ENCODE measurements at regions of chr6 and their contacts with region 1.

Region 1: DNA sequence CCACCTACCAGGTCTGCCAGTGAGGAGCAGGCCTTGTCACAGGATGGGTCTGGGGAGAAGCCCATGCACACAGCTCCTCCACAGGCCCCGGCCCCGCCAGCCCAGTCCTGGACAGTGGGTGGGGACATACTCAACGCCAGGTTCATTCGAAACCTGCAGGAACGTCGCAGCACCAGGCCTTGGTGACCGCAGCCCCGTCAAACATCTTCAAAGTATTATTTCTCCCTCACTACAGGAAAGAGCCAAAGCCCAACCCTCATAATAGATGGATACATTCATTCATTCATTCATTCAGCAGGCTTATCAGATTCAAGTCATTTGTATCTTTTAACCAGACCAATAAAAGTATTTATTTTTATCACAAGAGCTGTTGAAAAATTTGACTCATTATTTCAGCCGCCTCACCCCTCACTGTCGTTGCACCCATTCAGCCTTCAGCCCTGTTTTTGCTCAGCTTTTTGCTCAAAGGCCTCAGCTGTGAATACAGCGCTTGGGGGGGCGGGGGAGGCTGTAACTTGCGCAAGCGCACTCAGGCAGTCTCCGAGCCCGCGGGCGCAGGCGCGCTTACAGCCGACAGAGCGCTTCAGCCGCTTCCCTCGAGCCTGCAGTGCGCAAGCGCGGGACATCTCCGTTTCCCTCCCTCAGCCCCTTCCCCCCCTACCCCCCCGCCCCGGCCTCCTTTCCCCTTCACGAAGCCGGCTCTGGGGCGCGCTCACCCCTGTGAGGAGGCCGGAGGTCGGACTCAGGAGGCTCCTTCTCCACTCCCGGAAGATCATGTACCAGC is at the start of gene C6orf136:
- DNase-seq: peak; percentile 97
- H3K4me3 Mint-ChIP-seq: peak within 1 kb of the TSS; percentile 91
- H3K27ac Mint-ChIP-seq: peak within 1 kb of the TSS; percentile 94
- H3K4me1 Mint-ChIP-seq: peaks cover 28% of the 10 kb centered on the region
- H3K27me3 Mint-ChIP-seq: no peaks in the 10 kb centered on the region
- total RNA-seq, gene C6orf136: 28.9 and 39.4 TPM in 2 replicates

Region 2: GRCh38 chr6:30571075-30571768 is 75.4 kb before region 1 on chr6 and contains the start of gene ABCF1:
- intact Hi-C with region 1: loop called (anchors 2 kb)
- DNase-seq: peak; percentile 100
- H3K4me3 Mint-ChIP-seq: peak within 1 kb of the TSS; percentile 92
- H3K27ac Mint-ChIP-seq: peak within 1 kb of the TSS; percentile 99
- H3K4me1 Mint-ChIP-seq: peaks cover 59% of the 10 kb centered on the region
- H3K27me3 Mint-ChIP-seq: no peaks in the 10 kb centered on the region
- total RNA-seq, gene ABCF1: 123 and 125 TPM in 2 replicates

Region 3: DNA sequence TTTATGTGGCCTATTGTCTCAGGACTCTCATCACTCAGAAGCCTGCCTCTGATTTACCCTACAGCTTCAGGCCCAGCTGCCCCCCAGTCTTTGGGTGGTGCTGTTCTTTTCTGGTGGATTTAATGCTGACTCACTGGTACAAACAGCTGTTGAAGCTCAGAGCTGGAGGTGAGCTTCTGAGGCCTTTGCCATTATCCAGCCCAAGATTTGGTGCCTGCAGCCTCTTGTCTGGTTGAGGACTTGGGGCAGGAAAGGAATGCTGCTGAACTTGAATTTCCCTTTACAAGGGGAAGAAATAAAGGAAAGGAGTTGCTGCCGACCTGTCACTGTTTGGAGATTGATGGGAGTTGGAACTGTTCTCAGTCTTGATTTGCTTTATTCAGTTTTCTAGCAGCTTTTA is 55.7 kb before region 1 on chr6:
- intact Hi-C with region 1: no loop called
- DNase-seq: no peak
- H3K4me3 Mint-ChIP-seq: no peak overlapping the region
- H3K27ac Mint-ChIP-seq: no peak overlapping the region
- H3K4me1 Mint-ChIP-seq: peaks cover 9% of the 10 kb centered on the region
- H3K27me3 Mint-ChIP-seq: no peaks in the 10 kb centered on the region

Region 4: DNA sequence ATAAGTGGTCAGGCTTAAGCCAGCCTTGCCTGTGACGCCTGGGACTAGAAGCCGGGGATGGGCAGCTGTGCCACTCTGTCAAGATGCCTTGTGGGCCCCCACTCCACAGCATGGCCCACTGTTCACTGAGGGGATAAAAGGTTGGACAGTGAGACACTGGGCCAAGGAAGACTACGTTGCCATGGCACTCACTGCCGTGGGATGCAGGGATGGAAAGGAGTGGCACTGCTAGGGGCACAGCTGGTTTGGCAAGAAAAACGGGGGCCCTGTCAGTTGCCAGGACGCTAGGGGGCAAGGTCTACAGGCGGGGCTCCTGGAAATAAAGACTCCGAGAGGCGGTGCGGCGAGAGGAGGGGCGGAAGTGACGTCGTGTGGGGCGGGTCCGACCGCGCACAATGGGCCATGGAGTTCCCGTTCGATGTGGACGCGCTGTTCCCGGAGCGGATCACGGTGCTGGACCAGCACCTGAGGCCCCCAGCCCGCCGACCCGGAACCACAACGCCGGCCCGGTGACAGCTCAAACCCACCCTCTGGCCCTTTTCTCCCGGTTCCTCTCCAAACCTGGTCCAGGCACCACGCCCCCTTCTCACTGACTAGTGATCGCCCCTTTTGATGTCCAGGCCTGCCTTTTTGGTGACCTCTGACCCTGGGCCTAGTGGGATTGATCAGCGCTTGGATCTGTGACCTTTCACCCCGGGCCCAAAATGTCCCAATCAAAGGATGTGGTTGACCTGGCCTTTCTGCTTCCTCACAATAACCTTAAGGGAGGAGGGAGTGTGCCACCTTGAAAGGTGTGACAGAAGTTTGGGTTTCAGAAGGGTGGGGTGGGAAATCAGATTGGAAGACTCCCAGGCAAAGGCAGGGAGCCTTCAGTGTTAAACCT is 19.9 kb before region 1 on chr6 and contains the start of gene ATAT1:
- intact Hi-C with region 1: loop called (anchors 2 kb)
- DNase-seq: peak; percentile 97
- H3K4me3 Mint-ChIP-seq: peak within 1 kb of the TSS; percentile 91
- H3K27ac Mint-ChIP-seq: peak within 1 kb of the TSS; percentile 95
- H3K4me1 Mint-ChIP-seq: peaks cover 21% of the 10 kb centered on the region
- H3K27me3 Mint-ChIP-seq: no peaks in the 10 kb centered on the region
- total RNA-seq, gene ATAT1: 11.4 and 14.4 TPM in 2 replicates

Region 5: GRCh38 chr6:30672445-30673253 is 26.0 kb after region 1 on chr6 and contains the start of gene DHX16:
- intact Hi-C with region 1: loop called (anchors 1 kb)
- DNase-seq: peak; percentile 97
- H3K4me3 Mint-ChIP-seq: peak within 1 kb of the TSS; percentile 80
- H3K27ac Mint-ChIP-seq: peak within 1 kb of the TSS; percentile 54
- H3K4me1 Mint-ChIP-seq: peaks cover 32% of the 10 kb centered on the region
- H3K27me3 Mint-ChIP-seq: no peaks in the 10 kb centered on the region
- total RNA-seq, gene DHX16: 53.4 and 56.7 TPM in 2 replicates

Measured in activated CD4-positive, alpha-beta T cell treated with anti-CD3 and anti-CD28 coated beads, Interleukin-2, amount 10 ng/mL, durations not matched to agents 24 days and 14 days (primary cell).